Breast epithelium (tissue), 4 donors: ENCODE measurements at regions of chr1 and their contacts with region 1.

Region 1: DNA sequence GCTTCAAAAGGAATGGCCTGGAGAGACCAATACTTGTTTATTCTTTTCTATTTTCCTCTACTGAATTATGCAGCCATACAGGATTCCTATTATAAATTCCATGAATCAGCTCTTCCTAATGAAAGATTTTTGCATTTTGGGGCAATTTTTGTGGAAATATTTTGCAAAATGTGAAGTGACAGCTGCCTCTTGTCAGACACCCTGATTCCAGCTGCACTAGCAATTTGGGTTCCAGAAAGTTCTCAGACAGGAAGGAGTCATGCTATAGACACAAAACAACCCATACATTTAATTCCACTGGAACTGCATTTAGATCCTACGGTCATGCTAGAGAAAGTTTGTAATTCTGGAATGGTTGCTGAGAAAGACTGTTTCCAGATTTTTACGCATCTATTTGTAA is 119.5 kb downstream of the XCL2 start:
- DNase-seq: no peak
- H3K4me3 ChIP-seq: no peak overlapping the region
- H3K27ac ChIP-seq: no peak overlapping the region
- H3K4me1 ChIP-seq: no peaks in the 10 kb centered on the region
- H3K27me3 ChIP-seq: no peaks in the 10 kb centered on the region
- CTCF ChIP-seq: no peak
- POLR2A ChIP-seq: no peak

Region 2: GRCh38 chr1:168396940-168397698 is 27.2 kb before region 1 on chr1:
- intact Hi-C with region 1: loop called (anchors 1 kb)
- DNase-seq: no peak
- H3K4me3 ChIP-seq: no peak overlapping the region
- H3K27ac ChIP-seq: no peak overlapping the region
- H3K4me1 ChIP-seq: no peaks in the 10 kb centered on the region
- H3K27me3 ChIP-seq: no peaks in the 10 kb centered on the region
- CTCF ChIP-seq: no peak
- POLR2A ChIP-seq: no peak

Region 3: DNA sequence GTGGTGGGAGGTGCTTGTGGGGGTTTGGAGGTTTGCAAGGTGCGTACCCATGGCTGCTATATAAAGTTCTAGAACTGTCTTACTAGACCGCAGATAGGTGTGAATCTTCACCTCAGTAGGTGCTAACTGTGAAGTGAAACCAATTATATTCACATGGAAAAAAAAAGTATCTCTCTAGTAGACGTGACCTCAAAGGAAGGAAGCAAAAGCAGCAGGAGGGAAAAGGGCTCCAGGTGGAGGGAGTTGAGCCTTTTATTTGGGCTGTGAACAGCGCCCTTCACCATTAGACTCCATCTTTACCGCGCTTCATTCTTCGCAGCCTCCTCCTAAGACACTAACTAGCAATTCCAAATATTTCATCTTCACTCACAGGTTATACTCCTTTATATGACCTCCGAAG is 13.8 kb before region 1 on chr1:
- intact Hi-C with region 1: no loop called
- DNase-seq: no peak
- H3K4me3 ChIP-seq: no peak overlapping the region
- H3K27ac ChIP-seq: no peak overlapping the region
- H3K4me1 ChIP-seq: no peaks in the 10 kb centered on the region
- H3K27me3 ChIP-seq: no peaks in the 10 kb centered on the region
- CTCF ChIP-seq: no peak
- POLR2A ChIP-seq: no peak